Heart right ventricle (tissue), 16 donors: ENCODE measurements at regions of chr17 and their contacts with region 1.

Region 1: DNA sequence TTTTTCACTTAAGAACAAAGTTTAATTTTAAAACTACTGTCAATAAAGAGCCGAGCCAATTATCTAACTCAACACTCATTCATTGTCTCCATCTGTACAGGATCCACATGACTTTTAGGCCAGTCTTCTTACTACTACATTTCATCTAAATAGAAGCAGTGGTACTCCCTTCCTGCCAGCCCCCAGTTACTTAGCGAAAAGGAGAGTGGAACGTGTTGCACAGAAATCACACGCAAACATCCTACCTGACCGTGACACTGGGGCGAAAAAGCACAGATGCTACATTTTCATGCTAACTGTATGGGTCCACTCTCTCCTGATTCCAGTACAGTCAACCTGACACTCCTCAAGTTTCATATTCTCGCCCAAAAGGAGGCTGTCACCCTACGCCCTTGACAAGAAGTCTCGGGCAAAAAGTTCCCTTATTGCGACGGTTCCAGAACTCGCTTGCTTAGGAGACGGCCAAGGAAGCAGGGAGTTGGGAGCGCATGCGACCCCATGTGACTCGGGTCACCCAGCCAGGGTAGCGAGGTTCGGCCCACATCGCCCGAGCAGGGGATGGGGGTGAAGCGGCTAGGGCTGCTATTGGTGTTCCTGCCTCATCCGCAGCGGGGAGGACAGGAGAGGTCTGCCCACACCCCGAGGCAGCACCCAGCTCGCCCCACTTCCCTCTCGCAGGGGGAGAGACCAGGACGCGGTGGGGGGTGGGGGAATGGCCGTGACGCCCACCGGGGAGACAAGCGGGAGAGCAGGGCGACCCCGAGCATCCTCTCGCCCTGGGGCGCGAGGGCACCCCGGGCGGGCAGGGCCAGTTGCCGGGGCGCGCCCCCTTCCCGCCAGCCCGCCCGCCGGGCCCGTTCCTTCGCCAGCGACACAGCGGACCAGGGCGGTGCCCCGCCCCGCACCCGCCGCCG is 935 bp downstream of the GNA13 start:
- DNase-seq: peak; percentile 64 to 69
- ATAC-seq: peak; percentile 31 to 63 (median 36)
- H3K4me3 ChIP-seq: peak overlapping the region; percentile 64 to 94 (median 88)
- H3K27ac ChIP-seq: peak overlapping the region; percentile 93 to 100 (median 98)
- H3K4me1 ChIP-seq: peaks cover 4 to 80% (median 48%) of the 10 kb centered on the region in 9 donors
- H3K27me3 ChIP-seq: no peaks in the 10 kb centered on the region
- CTCF ChIP-seq: no peak

Region 2: GRCh38 chr17:64975329-64976087 is 80.1 kb before region 1 on chr17:
- intact Hi-C with region 1: loop called in 9 of 10 experiments (anchors 1 to 10 kb)
- DNase-seq: peak; percentile 93 to 97
- ATAC-seq: peak; percentile 97 to 99 (median 97)
- H3K4me3 ChIP-seq: peak overlapping the region; percentile 63 to 92 (median 80)
- H3K27ac ChIP-seq: peak overlapping the region; percentile 91 to 100 (median 96)
- H3K4me1 ChIP-seq: peaks cover 2 to 32% (median 12%) of the 10 kb centered on the region in 9 donors
- H3K27me3 ChIP-seq: no peaks in the 10 kb centered on the region
- CTCF ChIP-seq: no peak

Region 3: GRCh38 chr17:65017207-65017774 is 38.3 kb before region 1 on chr17:
- intact Hi-C with region 1: loop called in 1 of 10 experiments (anchors 5 kb)
- DNase-seq: no peak
- ATAC-seq: peak in 2 of 8 donors; percentile 19 to 48
- H3K4me3 ChIP-seq: no peak overlapping the region
- H3K27ac ChIP-seq: peak overlapping the region in 1 of 10 donors; percentile 34
- H3K4me1 ChIP-seq: peaks cover 6 to 78% (median 36%) of the 10 kb centered on the region in 9 donors
- H3K27me3 ChIP-seq: no peaks in the 10 kb centered on the region
- CTCF ChIP-seq: no peak

Region 4: DNA sequence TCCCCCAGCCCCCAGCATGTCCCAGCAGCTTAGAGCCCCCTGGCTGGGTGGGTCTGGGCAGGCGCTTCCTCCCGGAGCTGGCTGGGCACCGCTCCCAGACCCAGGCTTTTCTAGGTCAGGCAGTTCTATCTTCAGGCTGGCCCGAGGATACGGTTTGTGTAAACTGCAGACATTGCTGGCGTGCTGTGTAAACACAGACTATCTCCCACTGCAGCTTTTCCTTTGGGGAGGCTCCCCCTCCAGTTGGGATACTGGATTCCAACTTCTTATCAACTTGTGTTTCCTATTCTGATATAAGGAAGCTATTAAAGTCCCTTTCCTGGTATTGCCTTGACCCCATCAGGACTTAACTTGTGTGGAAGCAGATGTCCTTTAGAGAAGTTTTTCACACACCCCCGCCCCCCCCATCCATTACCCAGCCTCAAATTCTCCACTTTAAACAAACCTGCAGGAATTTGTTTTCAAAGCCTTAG is 19.2 kb after region 1 on chr17:
- intact Hi-C with region 1: loop called in 1 of 10 experiments (anchors 2 kb)
- DNase-seq: peak; percentile 72 to 74
- ATAC-seq: peak; percentile 85 to 93 (median 92)
- H3K4me3 ChIP-seq: peak overlapping the region in 2 of 10 donors; percentile 3 to 9
- H3K27ac ChIP-seq: peak overlapping the region in 7 of 10 donors; percentile 1 to 57 (median 35)
- H3K4me1 ChIP-seq: peaks cover 3 to 56% (median 25%) of the 10 kb centered on the region in 9 donors
- H3K27me3 ChIP-seq: no peaks in the 10 kb centered on the region
- CTCF ChIP-seq: peak in 2 of 9 donors; percentile 23 to 24

Region 5: DNA sequence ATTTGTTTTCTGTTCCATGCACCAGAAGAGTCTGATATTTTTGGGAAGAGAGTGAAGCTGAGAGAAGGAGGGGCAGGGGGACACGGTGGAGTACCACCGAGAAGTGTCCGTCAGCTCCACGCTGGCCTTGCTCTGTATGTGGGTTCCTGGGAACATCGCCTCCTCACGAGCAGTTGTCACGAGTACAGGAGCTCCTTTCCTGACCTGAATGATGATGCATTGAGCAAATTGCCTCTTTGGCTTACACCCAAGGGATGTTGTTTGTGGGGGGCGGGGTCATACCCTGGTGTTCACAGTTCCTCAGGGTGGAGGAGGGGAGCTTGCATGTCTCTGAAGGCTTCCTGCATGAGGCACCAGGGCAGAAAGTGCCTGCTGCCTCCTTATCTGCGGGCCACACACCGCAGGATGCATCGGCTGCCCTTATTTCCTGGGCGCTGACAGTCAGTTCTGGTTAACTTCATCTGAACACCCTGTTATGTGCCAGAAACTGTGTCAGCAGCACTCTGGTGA is 117.7 kb after region 1 on chr17:
- intact Hi-C with region 1: no loop called
- DNase-seq: peak; percentile 15 to 22
- ATAC-seq: peak in 7 of 8 donors; percentile 29 to 70 (median 56)
- H3K4me3 ChIP-seq: no peak overlapping the region
- H3K27ac ChIP-seq: peak overlapping the region in 1 of 10 donors; percentile 33
- H3K4me1 ChIP-seq: peaks cover 0 to 21% (median 11%) of the 10 kb centered on the region in 9 donors
- H3K27me3 ChIP-seq: peaks cover 0 to 8% (median 0%) of the 10 kb centered on the region in 7 donors
- CTCF ChIP-seq: no peak